HEK293 (cell line): ENCODE measurements at regions of chr7 and their contacts with region 1.

Region 1: DNA sequence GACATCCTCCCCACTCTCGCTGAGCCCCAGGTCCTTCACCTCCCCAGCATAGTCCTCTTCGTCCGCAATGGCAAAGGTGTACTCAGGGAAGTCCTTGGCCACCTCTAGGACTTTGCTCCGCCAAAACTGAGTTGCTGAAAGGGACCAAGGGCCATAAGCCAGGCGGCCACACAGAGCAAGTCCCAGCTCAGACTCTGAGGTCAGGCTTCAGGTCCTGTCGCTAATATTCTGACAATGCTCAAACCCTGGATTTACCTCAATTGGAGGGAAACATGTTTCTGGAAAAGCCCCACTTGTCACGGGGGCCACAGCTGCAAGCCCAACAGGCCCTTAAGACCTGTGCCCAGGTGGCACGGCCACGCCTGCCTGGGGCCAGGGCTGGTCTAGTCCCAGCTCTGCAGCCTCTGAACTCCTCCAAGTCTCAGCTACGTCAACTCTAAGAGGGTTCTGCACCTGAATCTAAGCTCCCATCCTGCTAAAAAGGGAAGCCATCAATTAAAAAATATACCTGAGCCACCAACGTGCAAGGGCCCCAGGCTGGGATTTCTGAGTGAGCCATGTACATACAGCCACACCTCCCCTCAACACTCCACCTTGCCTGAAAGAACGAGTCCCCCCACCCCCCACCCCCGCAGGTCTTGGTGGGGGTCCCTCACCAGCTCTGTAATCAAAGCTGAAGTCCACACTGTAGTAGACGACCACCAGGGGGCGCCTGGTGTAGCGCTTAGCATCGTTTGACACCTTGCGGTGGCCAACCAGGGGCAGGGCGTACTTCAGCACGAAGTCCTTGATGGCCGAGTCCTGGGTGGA is 22.9 kb downstream of the PDIA4 start:
- H3K4me3 ChIP-seq: no peak overlapping the region
- H3K27ac ChIP-seq: no peak overlapping the region
- H3K4me1 ChIP-seq: no peaks in the 10 kb centered on the region
- CTCF ChIP-seq: peak; percentile 71

Region 2: DNA sequence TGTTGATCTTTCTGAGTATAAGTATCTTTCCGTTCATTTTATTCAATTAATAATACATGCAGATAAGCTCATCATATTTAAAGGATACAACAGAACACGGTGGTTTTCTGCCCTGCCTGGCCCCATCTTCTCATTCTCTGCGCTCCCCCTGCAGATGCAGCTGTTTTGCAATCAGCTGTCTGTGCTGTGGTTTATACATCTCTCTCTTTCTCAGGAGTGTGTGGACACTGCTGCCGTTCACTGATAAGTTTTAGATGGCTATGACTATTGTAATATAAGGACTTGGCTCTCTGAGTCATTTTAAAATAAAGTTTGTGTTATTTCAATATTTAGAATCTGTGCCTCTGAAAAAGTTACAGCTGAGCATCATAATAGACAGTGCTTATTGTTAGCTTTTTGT is 252.2 kb before region 1 on chr7:
- CTCF ChIA-PET with region 1: no interaction called
- POLR2A ChIA-PET with region 1: no interaction called
- H3K4me3 ChIP-seq: no peak overlapping the region
- H3K27ac ChIP-seq: no peak overlapping the region
- H3K4me1 ChIP-seq: no peaks in the 10 kb centered on the region
- CTCF ChIP-seq: no peak

Region 3: DNA sequence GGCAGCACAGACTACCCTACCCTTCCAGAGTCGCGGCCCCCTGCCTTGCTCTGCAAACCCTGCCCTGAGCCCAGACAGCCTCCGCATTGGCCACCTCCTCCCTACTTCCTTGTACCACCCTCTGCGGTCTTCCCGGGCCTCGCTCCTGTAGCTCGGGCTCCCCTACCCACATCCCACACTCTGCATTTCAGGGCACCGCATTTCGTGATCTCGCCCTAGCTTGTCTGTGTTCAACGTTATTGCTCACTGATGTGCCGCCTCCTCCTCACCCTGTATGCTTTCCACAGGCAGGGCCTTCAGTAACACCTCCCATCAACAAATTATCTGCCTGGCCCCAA is 16.2 kb after region 1 on chr7:
- CTCF ChIA-PET with region 1: interaction called, 10 read pairs
- POLR2A ChIA-PET with region 1: interaction called, 3 read pairs
- H3K4me3 ChIP-seq: no peak overlapping the region
- H3K27ac ChIP-seq: no peak overlapping the region
- H3K4me1 ChIP-seq: peaks cover 2% of the 10 kb centered on the region; the same call in 1 of the 2 replicates
- CTCF ChIP-seq: no peak